ENCODE measurements at regions of chr1 and their contacts with region 1.

Region 1: DNA sequence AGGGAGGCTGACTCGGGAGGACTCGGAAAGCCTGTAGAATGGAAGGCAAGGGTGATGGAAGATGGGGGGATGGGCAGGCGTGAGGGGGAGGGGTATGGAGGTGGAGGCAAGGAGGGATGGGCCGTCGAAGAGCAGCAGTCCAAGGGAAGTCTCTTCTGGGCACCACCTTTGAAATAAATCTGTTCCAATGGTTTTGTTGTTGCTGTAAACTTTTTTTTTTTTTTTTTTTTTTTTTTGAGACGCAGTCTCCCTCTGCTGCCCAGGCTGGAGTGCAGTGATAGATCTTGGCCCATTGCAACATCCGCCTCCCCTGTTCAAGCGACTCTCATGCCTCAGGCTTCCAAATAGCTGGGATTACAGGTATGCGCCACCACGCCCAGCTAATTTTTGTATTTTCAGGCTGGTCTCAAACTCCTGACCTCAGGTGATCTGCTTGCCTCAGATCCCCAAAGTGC is 79.0 kb upstream of the SLC45A1 start:
- DNase-seq: peak; percentile 39
- H3K4me3 Mint-ChIP-seq: no peak overlapping the region
- H3K27ac Mint-ChIP-seq: peak overlapping the region; percentile 11
- H3K4me1 Mint-ChIP-seq: peaks cover 16% of the 10 kb centered on the region
- H3K27me3 Mint-ChIP-seq: no peaks in the 10 kb centered on the region
- CTCF ChIP-seq: no peak

Region 2: GRCh38 chr1:8077120-8077573 is 161.7 kb before region 1 on chr1:
- CTCF ChIA-PET with region 1: interaction called, 13 read pairs
- intact Hi-C with region 1: no loop called
- DNase-seq: peak; percentile 54
- H3K4me3 Mint-ChIP-seq: no peak overlapping the region
- H3K27ac Mint-ChIP-seq: no peak overlapping the region
- H3K4me1 Mint-ChIP-seq: peaks cover 32% of the 10 kb centered on the region
- H3K27me3 Mint-ChIP-seq: no peaks in the 10 kb centered on the region
- CTCF ChIP-seq: no peak

Region 3: DNA sequence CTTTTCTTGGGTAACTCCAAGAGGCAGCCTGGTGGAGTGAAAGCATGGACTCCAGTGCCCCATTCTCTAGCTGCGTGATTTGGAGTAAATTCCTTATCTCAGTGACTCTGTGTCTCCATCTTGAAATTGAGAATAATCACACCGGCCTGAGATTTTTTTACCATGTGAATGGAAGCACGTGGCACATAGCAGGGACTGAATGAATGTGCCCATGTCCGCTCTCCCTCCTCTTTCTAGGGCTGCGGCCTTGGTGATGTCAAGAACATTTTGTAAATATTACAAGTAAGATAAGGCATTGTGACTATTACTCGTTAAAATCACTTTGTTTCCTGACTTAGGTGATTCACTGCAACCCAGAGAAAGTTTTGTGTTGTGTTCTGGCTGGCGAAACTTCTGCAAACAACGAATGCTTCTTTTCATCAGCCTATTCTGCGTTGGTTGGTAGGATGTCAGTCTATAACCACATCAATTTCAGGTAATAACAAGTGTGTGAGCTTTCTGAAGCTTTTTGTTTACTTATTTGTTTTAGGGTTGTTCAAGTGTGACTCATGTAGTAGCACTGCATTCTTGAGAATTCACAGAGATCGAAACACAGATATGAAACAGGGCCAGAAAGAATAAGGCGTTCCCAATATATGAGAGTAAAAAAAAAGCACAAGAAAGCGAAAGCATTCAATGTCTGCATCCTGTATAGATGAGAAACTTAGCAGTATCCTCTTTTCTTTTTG is 56.7 kb before region 1 on chr1:
- CTCF ChIA-PET with region 1: interaction called, 10 read pairs
- intact Hi-C with region 1: no loop called
- DNase-seq: peak; percentile 68
- H3K4me3 Mint-ChIP-seq: peak overlapping the region; percentile 44
- H3K27ac Mint-ChIP-seq: peak overlapping the region; percentile 91
- H3K4me1 Mint-ChIP-seq: no peaks in the 10 kb centered on the region
- H3K27me3 Mint-ChIP-seq: no peaks in the 10 kb centered on the region
- CTCF ChIP-seq: no peak